Aorta (tissue), 5 donors: ENCODE measurements at regions of chr18 and their contacts with region 1.

Region 1: DNA sequence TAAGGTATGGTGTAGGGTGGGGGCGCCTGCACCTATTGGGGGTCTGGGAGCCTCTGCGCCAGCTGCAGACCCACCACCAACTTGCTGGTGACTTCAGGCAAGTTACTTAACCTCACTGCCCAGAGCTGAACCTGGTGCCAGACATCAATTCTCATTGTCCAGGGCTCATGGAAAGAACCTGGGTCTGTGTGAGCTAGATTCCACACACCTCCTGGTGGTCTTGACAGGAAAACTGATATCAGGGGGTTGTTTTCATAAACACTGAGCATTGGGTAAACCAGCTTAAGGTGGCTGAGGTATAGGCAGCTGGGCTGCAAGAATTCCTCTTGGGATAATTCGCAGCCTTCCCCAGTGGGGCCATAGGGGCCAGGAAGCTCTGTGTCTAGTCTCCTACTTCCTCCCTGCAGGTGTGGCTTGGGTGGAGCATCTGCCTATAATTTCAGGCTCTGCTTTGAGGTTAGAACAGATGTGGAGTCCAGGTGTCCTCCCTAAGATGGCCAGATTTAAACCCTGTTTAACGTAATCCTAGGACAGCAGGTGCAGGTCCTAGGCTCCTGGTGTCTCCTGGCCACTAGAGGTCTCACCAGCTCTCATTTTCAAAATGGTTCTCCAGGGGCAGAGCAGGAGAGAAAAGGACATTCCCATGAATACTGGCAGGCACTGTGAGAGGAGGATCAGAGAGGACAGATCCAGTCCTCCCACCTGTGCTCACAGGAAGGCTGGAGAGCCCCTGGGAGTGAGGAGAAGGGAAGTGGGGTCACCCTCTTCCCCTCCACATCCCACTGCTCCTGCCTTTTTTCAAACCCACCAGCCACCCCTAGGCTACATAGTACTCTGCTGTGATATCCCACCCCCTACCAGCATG is 100.4 kb upstream of the SMAD2 start:
- DNase-seq: peak in 1 of 2 donors; percentile 55
- ATAC-seq: peak; percentile 58
- H3K4me3 ChIP-seq: no peak overlapping the region
- H3K27ac ChIP-seq: no peak overlapping the region
- H3K4me1 ChIP-seq: no peaks in the 10 kb centered on the region
- H3K27me3 ChIP-seq: no peaks in the 10 kb centered on the region

Region 2: GRCh38 chr18:47930931-47931717 is 99.7 kb before region 1 on chr18:
- intact Hi-C with region 1: no loop called
- DNase-seq: peak; percentile 98 to 99
- ATAC-seq: peak; percentile 96
- H3K4me3 ChIP-seq: peak overlapping the region; percentile 84 to 92
- H3K27ac ChIP-seq: peak overlapping the region; percentile 78 to 92
- H3K4me1 ChIP-seq: peaks cover 0 to 3% of the 10 kb centered on the region in 2 donors
- H3K27me3 ChIP-seq: no peaks in the 10 kb centered on the region

Region 3: DNA sequence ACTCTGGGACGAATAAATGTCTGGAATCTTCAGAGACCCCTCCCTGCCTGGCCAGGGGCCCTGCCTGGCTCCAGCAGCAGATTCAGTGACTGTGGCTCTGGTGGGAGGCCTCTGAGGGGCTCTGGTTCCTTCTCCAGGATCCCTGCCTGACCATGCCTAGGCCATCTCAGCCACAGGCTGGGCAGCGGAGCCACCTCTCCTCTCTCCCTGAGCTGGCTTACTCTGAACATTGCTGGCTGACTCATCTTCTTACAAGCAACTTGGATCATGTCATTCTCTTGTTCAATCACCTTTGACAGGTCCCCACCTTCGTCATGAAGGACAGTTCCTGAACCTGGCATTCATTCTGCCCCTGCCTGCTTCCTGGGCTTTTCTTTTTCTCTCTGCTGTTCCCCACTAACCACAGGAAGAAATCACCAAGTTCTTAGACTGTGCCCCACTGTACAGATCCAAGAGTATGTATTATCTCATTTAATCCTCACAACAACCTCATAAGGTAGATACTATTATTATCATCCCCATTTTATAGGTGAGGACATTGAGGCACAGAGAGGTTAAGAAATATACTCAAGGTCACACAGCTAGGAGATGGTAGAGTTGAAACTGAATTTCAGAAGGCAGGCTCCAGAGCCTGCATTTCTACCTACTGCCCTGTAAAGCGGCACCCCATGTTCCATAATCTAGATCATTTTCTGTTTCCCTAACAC is 55.1 kb after region 1 on chr18:
- intact Hi-C with region 1: no loop called
- DNase-seq: peak in 1 of 2 donors; percentile 51
- ATAC-seq: no peak
- H3K4me3 ChIP-seq: no peak overlapping the region
- H3K27ac ChIP-seq: no peak overlapping the region
- H3K4me1 ChIP-seq: no peaks in the 10 kb centered on the region
- H3K27me3 ChIP-seq: no peaks in the 10 kb centered on the region

Region 4: DNA sequence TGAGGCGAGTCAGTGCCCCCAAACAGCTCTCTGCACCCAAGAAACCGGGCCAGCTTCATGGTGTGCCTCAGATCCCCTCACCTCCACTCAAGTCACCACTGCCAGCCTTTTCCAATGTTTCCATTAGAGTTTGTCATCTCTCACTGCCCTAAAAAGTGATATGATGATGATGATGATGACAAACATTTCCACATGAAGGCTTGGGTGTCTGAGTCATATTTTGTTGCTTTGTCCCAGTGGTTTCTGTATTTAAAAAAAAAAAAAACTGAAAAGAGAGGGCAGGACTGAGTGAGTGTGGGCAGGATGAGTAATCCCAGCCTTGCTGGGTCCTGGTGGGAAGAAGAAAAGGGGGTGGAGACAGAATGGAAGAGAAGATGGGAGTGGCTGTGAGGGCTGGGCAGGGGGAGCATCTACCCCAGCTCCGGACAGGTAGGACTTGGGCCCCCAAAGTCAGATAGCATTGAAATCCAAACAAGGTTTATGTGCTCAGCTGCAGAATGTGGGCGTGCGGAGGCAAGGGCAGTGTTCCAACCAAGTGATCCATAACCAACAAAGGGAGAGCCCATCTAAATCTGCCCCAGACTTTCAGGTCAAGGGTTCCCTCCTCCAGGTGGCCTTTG is 299.7 kb after region 1 on chr18:
- intact Hi-C with region 1: loop called in 1 of 2 experiments (anchors 10 kb)
- DNase-seq: peak; percentile 55 to 73
- ATAC-seq: peak; percentile 35
- H3K4me3 ChIP-seq: no peak overlapping the region
- H3K27ac ChIP-seq: peak overlapping the region in 1 of 2 donors; percentile 68
- H3K4me1 ChIP-seq: peaks cover 0 to 11% of the 10 kb centered on the region in 2 donors
- H3K27me3 ChIP-seq: no peaks in the 10 kb centered on the region

Region 5: GRCh38 chr18:48410095-48410920 is 379.5 kb after region 1 on chr18:
- intact Hi-C with region 1: loop called in 1 of 2 experiments (anchors 5 kb)
- DNase-seq: peak; percentile 95 to 98
- ATAC-seq: peak; percentile 97
- H3K4me3 ChIP-seq: peak overlapping the region; percentile 94 to 97
- H3K27ac ChIP-seq: peak overlapping the region; percentile 16 to 81
- H3K4me1 ChIP-seq: peaks cover 0 to 5% of the 10 kb centered on the region in 2 donors
- H3K27me3 ChIP-seq: no peaks in the 10 kb centered on the region

Region 6: DNA sequence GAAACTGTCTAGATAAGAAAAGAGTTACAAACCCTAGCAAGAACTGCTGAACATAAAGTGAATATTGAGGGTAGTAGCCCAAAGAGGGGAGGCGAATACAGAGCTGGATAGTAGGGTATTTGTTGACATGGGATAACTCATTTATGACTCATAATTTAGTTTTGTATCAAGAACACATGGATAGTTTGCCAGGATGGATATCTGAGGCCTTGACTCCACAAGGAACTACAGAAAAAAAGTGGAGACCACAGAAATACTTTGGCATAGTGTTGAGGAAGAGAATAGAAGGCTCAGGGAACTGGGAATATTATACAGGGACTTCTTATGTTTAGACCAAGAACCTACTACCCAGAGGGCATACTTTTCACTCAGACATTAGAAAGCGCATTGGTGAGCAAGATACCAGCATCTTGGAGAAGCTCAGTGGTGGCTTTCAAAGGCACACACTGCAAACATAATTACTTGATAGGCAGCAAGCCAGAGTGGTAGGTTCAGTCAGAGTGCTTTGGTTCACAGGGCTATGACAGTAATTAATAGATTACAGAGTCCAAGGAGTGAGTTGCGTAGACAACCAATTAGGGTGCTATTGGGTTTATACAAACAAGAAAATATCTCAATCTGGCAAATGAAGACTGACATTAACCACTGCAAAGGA is 430.2 kb after region 1 on chr18:
- intact Hi-C with region 1: loop called (anchors 5 kb)
- DNase-seq: no peak
- ATAC-seq: no peak
- H3K4me3 ChIP-seq: no peak overlapping the region
- H3K27ac ChIP-seq: no peak overlapping the region
- H3K4me1 ChIP-seq: no peaks in the 10 kb centered on the region
- H3K27me3 ChIP-seq: no peaks in the 10 kb centered on the region

Region 7: DNA sequence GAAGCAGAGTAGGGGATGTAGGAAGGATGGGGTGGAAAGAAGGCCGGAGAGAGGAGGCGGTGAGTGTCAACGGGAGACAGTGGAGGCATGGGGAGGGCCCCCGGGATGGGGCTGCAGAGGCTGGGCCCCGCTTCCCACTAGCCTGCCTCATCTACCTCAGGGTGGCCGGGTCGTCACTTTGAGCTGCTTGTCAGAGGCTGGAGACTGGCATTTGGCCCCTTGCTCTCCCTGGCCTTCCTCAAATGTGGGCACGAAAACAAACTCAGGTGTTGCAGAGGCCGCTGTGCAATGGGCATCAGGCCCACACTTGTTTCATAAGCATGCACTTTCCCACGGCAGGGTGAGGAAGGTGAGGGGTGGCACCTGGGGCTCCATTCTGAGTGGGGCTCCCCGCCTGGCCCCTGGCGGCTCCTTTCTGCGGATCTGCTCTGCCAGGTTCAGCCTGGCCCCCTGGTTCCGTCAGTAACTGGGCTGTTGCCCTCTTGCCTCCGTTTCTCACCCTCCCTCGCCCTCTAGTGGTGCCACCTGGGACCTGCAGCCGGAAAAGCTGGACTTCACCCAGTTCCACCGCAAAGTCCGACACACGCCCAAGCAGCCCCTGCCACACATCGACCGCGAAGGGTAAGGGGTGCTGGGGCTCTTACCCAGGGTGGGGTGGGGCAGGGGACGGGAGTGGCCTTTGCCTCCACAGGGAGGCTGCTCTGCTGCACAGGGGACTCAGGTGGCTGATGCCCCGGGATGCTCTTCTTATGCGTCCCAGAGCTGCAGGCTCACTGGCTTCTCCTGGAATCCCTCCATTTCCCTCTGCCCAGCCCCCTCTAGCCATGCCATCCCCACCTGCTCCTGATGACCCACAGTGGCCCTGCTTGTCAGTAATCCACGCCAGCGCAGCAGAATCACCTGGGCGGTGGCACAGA is 633.3 kb after region 1 on chr18:
- intact Hi-C with region 1: loop called in 1 of 2 experiments (anchors 10 kb)
- DNase-seq: peak; percentile 80 to 93
- ATAC-seq: peak; percentile 78
- H3K4me3 ChIP-seq: no peak overlapping the region
- H3K27ac ChIP-seq: no peak overlapping the region
- H3K4me1 ChIP-seq: no peaks in the 10 kb centered on the region
- H3K27me3 ChIP-seq: no peaks in the 10 kb centered on the region